ENCODE measurements at regions of chr2 and their contacts with region 1.

Region 1: DNA sequence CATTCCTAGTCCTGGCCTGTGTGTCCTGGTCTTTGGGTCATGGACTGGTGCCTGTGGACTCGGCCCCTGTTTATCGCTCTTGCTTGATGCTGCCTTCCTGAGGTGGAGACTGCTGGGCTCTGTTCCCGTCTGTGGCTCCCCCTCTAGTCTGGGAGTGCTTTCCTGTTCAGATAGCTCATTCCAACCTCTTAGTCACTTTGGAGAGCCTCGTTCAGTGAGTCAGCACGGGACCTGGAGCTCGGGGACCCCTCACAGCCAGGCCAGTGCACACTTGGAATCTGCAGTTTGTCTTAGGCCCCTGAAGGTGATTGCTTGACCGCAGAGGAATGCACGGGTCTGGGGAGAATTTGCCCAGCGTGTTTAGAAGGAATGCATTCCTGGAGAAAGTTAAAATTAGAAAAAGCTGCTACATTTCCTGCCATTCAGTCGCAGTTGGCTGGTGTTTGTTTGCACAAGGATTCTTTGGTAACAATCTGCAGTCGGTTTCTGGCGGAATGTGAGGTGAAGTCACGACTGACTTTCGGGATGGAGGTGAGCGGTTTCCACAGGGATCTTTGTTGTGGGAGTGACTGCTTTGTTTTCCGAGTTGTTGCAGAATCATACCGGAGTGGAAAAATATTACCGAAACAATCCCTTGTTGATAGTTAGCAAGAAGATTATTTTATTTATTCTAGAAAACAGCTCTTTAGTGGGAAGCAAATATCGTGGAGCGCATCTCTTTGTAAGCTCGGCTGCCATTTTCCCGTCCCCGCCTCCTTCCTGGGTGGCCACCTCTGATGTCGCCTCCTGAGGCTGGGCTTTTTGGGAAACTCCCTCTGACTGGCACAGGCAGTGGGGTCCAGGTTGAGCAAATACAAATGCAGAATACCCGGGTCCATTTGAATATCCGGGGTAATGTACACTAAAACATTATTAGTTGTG is 29.6 kb downstream of the SH3BP4 start:
- DNase-seq: peak; percentile 94
- ATAC-seq: peak; percentile 59
- H3K4me3 ChIP-seq: peak overlapping the region; percentile 41 to 64 (median 48)
- H3K27ac ChIP-seq: peak overlapping the region; percentile 88
- H3K4me1 ChIP-seq: peaks cover 100% of the 10 kb centered on the region
- H3K27me3 ChIP-seq: no peaks in the 10 kb centered on the region; a peak in 1 of 5 replicates
- CTCF ChIP-seq: peak; percentile 63
- EP300 ChIP-seq: peak; percentile 3 to 71; a peak in 3 of 4 replicates
- POLR2A ChIP-seq: peak; percentile 27 to 72; a peak in 3 of 4 replicates
- RAD21 ChIP-seq: peak; percentile 36; the same call in 1 of the 2 replicates

Region 2: DNA sequence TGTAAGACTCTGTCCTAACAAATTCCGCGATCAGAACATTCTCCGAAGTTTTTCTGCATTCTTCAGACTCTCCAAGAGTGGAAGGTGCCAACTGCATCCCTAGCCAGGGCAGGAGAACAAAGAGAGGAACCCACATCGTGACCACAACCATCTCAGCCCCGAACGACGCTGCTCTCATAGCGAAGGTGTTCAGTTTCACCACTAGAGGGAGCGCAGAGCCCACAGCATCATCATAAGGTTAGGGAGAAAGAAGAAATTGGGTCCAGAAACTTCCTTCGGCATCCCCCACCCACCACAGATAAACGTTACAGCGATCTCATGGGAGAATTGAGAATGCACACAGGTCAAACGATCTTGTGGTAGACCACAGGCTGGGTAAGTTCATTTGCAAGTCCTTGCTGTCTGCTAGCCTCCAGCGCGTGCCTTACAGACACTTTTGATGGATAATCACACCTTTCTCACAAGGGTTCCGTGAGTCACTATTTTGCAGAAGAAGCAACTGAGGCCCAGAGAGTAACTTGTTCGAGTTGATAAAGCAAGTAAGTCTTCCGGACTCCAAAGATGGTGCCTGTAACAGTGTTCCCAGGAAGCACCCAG is 430.8 kb before region 1 on chr2:
- CTCF ChIA-PET with region 1: no interaction called
- POLR2A ChIA-PET with region 1: no interaction called
- in situ Hi-C with region 1: no loop called
- intact Hi-C with region 1: loop called (anchors 10 kb)
- DNase-seq: peak; percentile 73
- ATAC-seq: peak; percentile 88
- H3K4me3 ChIP-seq: no peak overlapping the region
- H3K27ac ChIP-seq: no peak overlapping the region
- H3K4me1 ChIP-seq: peaks cover 33% of the 10 kb centered on the region
- H3K27me3 ChIP-seq: peaks cover 2 to 33% of the 10 kb centered on the region in 2 experiments; a peak in 4 of 5 replicates
- CTCF ChIP-seq: peak; percentile 99
- EP300 ChIP-seq: no peak
- POLR2A ChIP-seq: no peak
- RAD21 ChIP-seq: peak; percentile 97

Region 3: GRCh38 chr2:234674781-234675201 is 306.7 kb before region 1 on chr2:
- CTCF ChIA-PET with region 1: no interaction called
- POLR2A ChIA-PET with region 1: interaction called, 12 read pairs
- in situ Hi-C with region 1: no loop called
- intact Hi-C with region 1: no loop called
- DNase-seq: peak; percentile 80
- ATAC-seq: peak; percentile 43
- H3K4me3 ChIP-seq: no peak overlapping the region
- H3K27ac ChIP-seq: peak overlapping the region; percentile 94
- H3K4me1 ChIP-seq: peaks cover 77% of the 10 kb centered on the region
- H3K27me3 ChIP-seq: no peaks in the 10 kb centered on the region
- CTCF ChIP-seq: no peak
- EP300 ChIP-seq: peak in 1 of 2 experiments; percentile 64; a peak in 2 of 4 replicates
- POLR2A ChIP-seq: no peak
- RAD21 ChIP-seq: no peak

Region 4: DNA sequence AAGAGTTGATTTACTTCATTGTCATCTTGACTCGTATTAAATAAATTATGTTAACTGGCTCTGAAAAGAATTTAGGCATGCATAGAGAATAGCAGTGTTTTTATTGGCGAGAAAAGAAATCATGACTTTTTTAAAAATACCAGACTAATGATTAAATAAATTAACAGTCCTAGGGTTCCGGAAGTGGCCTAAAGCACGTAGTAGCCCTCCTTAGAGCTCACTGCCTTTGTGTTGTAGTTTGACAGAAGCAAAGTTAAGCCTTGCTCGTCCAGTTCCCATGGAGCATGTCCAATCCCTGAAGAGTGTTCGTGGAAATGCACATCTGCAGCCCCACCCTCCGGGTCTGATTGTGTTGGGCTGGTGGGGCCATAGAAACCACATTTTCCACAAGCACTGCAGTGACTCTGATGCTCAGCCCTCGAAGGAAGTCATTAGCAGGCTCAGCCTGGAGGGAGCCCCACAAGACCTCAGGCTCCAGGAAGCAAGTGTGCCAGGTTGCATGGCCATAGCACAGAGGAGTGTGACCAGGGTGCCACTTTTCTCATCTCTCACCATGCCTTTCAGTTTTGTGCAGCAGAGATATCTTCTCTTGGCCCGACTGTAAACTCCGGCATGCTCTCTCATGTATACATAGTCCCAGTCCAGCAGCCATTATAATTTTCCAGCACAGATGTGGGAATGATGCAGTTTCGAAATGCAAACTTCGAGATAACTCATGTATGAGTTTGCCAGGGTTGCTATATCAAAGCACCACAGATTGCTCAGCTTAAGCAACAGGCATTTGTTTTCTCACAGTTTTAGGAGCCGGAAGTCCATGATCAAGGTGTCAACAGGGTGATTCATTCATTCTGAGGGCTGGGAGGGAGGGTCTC is 218.2 kb before region 1 on chr2:
- CTCF ChIA-PET with region 1: no interaction called
- POLR2A ChIA-PET with region 1: no interaction called
- in situ Hi-C with region 1: no loop called
- intact Hi-C with region 1: no loop called
- DNase-seq: peak; percentile 86
- ATAC-seq: peak; percentile 91
- H3K4me3 ChIP-seq: no peak overlapping the region; a peak in 1 of 6 replicates
- H3K27ac ChIP-seq: no peak overlapping the region
- H3K4me1 ChIP-seq: peaks cover 49% of the 10 kb centered on the region
- H3K27me3 ChIP-seq: no peaks in the 10 kb centered on the region
- CTCF ChIP-seq: no peak
- EP300 ChIP-seq: peak in 1 of 2 experiments; percentile 88; a peak in 2 of 4 replicates
- POLR2A ChIP-seq: no peak
- RAD21 ChIP-seq: no peak

Region 5: GRCh38 chr2:234840336-234840735 is 141.1 kb before region 1 on chr2:
- CTCF ChIA-PET with region 1: no interaction called
- POLR2A ChIA-PET with region 1: interaction called, 11 read pairs
- in situ Hi-C with region 1: no loop called
- intact Hi-C with region 1: no loop called
- DNase-seq: peak; percentile 69
- ATAC-seq: peak; percentile 26
- H3K4me3 ChIP-seq: no peak overlapping the region
- H3K27ac ChIP-seq: no peak overlapping the region
- H3K4me1 ChIP-seq: peaks cover 95% of the 10 kb centered on the region
- H3K27me3 ChIP-seq: no peaks in the 10 kb centered on the region
- CTCF ChIP-seq: no peak
- EP300 ChIP-seq: peak in 1 of 2 experiments; percentile 24; a peak in 1 of 4 replicates
- POLR2A ChIP-seq: no peak
- RAD21 ChIP-seq: no peak

Region 6: GRCh38 chr2:234996069-234996940 is 14.8 kb after region 1 on chr2:
- CTCF ChIA-PET with region 1: no interaction called
- POLR2A ChIA-PET with region 1: interaction called, 268 read pairs
- in situ Hi-C with region 1: no loop called
- intact Hi-C with region 1: loop called (anchors 1 kb)
- DNase-seq: peak; percentile 86
- ATAC-seq: peak; percentile 13
- H3K4me3 ChIP-seq: peak overlapping the region in 1 of 3 experiments; percentile 2; a peak in 1 of 6 replicates
- H3K27ac ChIP-seq: peak overlapping the region; percentile 75
- H3K4me1 ChIP-seq: peaks cover 100% of the 10 kb centered on the region
- H3K27me3 ChIP-seq: no peaks in the 10 kb centered on the region
- CTCF ChIP-seq: no peak
- EP300 ChIP-seq: peak in 1 of 2 experiments; percentile 33; a peak in 1 of 4 replicates
- POLR2A ChIP-seq: no peak
- RAD21 ChIP-seq: peak; percentile 19; the same call in 1 of the 2 replicates

Region 7: GRCh38 chr2:235005603-235006259 is 24.3 kb after region 1 on chr2:
- CTCF ChIA-PET with region 1: no interaction called
- POLR2A ChIA-PET with region 1: interaction called, 268 read pairs
- in situ Hi-C with region 1: no loop called
- intact Hi-C with region 1: no loop called
- DNase-seq: peak; percentile 98
- ATAC-seq: peak; percentile 88
- H3K4me3 ChIP-seq: peak overlapping the region in 1 of 3 experiments; percentile 29; a peak in 2 of 6 replicates
- H3K27ac ChIP-seq: peak overlapping the region; percentile 70
- H3K4me1 ChIP-seq: peaks cover 84% of the 10 kb centered on the region
- H3K27me3 ChIP-seq: no peaks in the 10 kb centered on the region
- CTCF ChIP-seq: peak; percentile 83
- EP300 ChIP-seq: peak; percentile 70 to 88; a peak in 3 of 4 replicates
- POLR2A ChIP-seq: no peak
- RAD21 ChIP-seq: peak; percentile 83

Region 8: GRCh38 chr2:235666213-235666781 is 684.8 kb after region 1 on chr2:
- CTCF ChIA-PET with region 1: no interaction called
- POLR2A ChIA-PET with region 1: no interaction called
- in situ Hi-C with region 1: no loop called
- intact Hi-C with region 1: no loop called
- DNase-seq: peak; percentile 77
- ATAC-seq: peak; percentile 53
- H3K4me3 ChIP-seq: peak overlapping the region; percentile 5 to 51 (median 36); a peak in 4 of 6 replicates
- H3K27ac ChIP-seq: peak overlapping the region; percentile 8
- H3K4me1 ChIP-seq: peaks cover 42% of the 10 kb centered on the region
- H3K27me3 ChIP-seq: no peaks in the 10 kb centered on the region
- CTCF ChIP-seq: no peak
- EP300 ChIP-seq: no peak
- POLR2A ChIP-seq: no peak
- RAD21 ChIP-seq: no peak

Measured in HepG2 (cell line).